GM12878 (cell line): ENCODE measurements at regions of chr6 and their contacts with region 1.

Region 1: DNA sequence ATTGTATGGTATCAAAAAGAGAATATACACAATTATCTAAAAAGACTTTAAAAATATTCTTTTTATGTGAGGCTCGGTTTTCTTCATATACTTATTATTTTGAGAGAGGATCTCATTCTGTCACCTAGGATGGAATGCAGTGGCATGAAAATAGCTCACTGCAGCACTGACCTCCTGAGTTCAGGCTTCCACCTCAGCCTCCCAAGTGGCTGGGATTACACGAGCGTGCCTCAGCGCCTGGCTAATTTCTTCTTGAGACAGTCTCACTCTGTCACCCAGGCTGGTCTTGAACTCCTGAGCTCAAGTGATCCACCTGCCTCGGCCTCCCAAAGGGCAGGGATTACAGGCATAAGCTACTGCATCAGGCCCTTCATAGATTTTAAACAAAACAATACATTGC is 10.7 kb downstream of the DEK start:
- DNase-seq: no peak
- ATAC-seq: no peak
- H3K4me3 ChIP-seq: no peak overlapping the region
- H3K27ac ChIP-seq: no peak overlapping the region
- H3K4me1 ChIP-seq: no peaks in the 10 kb centered on the region
- H3K27me3 ChIP-seq: no peaks in the 10 kb centered on the region
- CTCF ChIP-seq: no peak
- EP300 ChIP-seq: no peak
- POLR2A ChIP-seq: no peak
- RAD21 ChIP-seq: no peak

Region 2: GRCh38 chr6:18166312-18167036 is 87.2 kb before region 1 on chr6:
- CTCF ChIA-PET with region 1: no interaction called
- POLR2A ChIA-PET with region 1: no interaction called
- RAD21 ChIA-PET with region 1: no interaction called
- SMC1A ChIA-PET with region 1: no interaction called
- in situ Hi-C with region 1: no loop called
- intact Hi-C with region 1: no loop called
- DNase-seq: no peak
- ATAC-seq: no peak
- H3K4me3 ChIP-seq: no peak overlapping the region
- H3K27ac ChIP-seq: no peak overlapping the region
- H3K4me1 ChIP-seq: no peaks in the 10 kb centered on the region
- H3K27me3 ChIP-seq: no peaks in the 10 kb centered on the region
- CTCF ChIP-seq: no peak
- EP300 ChIP-seq: no peak
- POLR2A ChIP-seq: no peak
- RAD21 ChIP-seq: no peak

Region 3: GRCh38 chr6:18242062-18242851 is 11.4 kb before region 1 on chr6:
- CTCF ChIA-PET with region 1: interaction called, 4 read pairs
- POLR2A ChIA-PET with region 1: interaction called, 8 read pairs
- RAD21 ChIA-PET with region 1: interaction called, 17 read pairs
- SMC1A ChIA-PET with region 1: interaction called, 18 read pairs
- in situ Hi-C with region 1: no loop called
- intact Hi-C with region 1: no loop called
- DNase-seq: no peak
- ATAC-seq: no peak
- H3K4me3 ChIP-seq: no peak overlapping the region
- H3K27ac ChIP-seq: no peak overlapping the region; the same call in 1 of the 2 replicates
- H3K4me1 ChIP-seq: peaks cover 7% of the 10 kb centered on the region
- H3K27me3 ChIP-seq: no peaks in the 10 kb centered on the region
- CTCF ChIP-seq: no peak
- EP300 ChIP-seq: no peak
- POLR2A ChIP-seq: no peak
- RAD21 ChIP-seq: no peak